MCF 10A (cell line): ENCODE measurements at regions of chr11 and their contacts with region 1.

Region 1: GRCh38 chr11:108647701-108648527 is 17.0 kb upstream of the DDX10 start:
- DNase-seq: peak; percentile 82
- H3K4me3 Mint-ChIP-seq: peak overlapping the region; percentile 36
- H3K27ac Mint-ChIP-seq: peak overlapping the region; percentile 90
- H3K4me1 Mint-ChIP-seq: peaks cover 15% of the 10 kb centered on the region
- H3K27me3 Mint-ChIP-seq: no peaks in the 10 kb centered on the region
- CTCF ChIP-seq: peak; percentile 80

Region 2: GRCh38 chr11:108121274-108122155 is 526.4 kb before region 1 on chr11 and contains the start of gene ACAT1:
- CTCF ChIA-PET with region 1: interaction called, 8 read pairs
- POLR2A ChIA-PET with region 1: interaction called, 4 read pairs
- intact Hi-C with region 1: loop called (anchors 2 kb)
- DNase-seq: peak; percentile 95
- H3K4me3 Mint-ChIP-seq: peak within 1 kb of the TSS; percentile 83
- H3K27ac Mint-ChIP-seq: peak within 1 kb of the TSS; percentile 91
- H3K4me1 Mint-ChIP-seq: peaks cover 38% of the 10 kb centered on the region
- H3K27me3 Mint-ChIP-seq: no peaks in the 10 kb centered on the region
- CTCF ChIP-seq: peak; percentile 7
- total RNA-seq, gene ACAT1: 75.5 and 86.8 TPM in 2 replicates

Region 3: DNA sequence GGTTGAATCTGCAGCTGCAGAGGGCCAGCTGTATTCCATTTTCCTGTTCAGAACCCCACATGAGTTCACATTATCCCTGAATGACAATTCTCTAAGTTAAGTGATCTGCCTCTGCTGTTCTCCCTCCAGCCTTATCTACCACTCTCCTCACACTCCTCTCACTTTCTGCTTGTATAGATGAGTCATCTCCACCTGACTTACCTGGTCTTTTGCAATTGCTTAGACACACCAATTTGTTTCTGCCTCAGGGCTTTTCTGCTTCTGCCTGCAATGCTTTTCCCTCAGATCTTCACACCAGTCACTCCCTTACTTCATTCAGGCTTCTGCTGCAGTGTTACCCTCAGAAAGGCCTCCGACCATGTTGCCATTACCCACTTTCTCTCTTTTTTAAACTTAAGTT is 306.9 kb before region 1 on chr11:
- CTCF ChIA-PET with region 1: interaction called, 4 read pairs
- POLR2A ChIA-PET with region 1: interaction called, 6 read pairs
- intact Hi-C with region 1: loop called (anchors 5 kb)
- DNase-seq: peak; percentile 92
- H3K4me3 Mint-ChIP-seq: no peak overlapping the region
- H3K27ac Mint-ChIP-seq: peak overlapping the region; percentile 4
- H3K4me1 Mint-ChIP-seq: peaks cover 20% of the 10 kb centered on the region
- H3K27me3 Mint-ChIP-seq: no peaks in the 10 kb centered on the region
- CTCF ChIP-seq: no peak

Region 4: DNA sequence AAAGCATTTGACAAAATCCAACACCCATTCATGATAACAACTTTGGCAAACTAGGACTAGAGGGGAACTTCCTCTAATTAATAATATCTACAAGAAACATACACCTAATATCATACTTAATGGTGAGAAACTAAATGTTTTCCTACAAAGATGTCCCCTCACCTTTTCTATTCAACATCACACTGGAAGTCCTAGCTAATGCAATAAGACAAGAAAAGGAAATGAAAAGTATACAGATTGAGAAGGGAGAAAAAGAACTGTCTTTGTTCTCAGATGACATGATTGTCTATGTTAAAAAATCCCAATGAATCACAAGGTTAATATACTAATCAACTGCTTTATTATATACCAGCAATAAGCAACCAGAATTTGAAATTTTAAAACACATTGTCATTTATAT is 233.0 kb before region 1 on chr11:
- CTCF ChIA-PET with region 1: interaction called, 4 read pairs
- POLR2A ChIA-PET with region 1: interaction called, 3 read pairs
- intact Hi-C with region 1: loop called (anchors 1 kb)
- DNase-seq: no peak
- H3K4me3 Mint-ChIP-seq: no peak overlapping the region
- H3K27ac Mint-ChIP-seq: no peak overlapping the region
- H3K4me1 Mint-ChIP-seq: no peaks in the 10 kb centered on the region
- H3K27me3 Mint-ChIP-seq: no peaks in the 10 kb centered on the region
- CTCF ChIP-seq: no peak

Region 5: GRCh38 chr11:108467091-108467823 is 180.7 kb before region 1 on chr11 and contains the start of gene C11orf65:
- CTCF ChIA-PET with region 1: interaction called, 4 read pairs
- POLR2A ChIA-PET with region 1: interaction called, 5 read pairs
- intact Hi-C with region 1: loop called (anchors 5 kb)
- DNase-seq: peak; percentile 98
- H3K4me3 Mint-ChIP-seq: peak within 1 kb of the TSS; percentile 93
- H3K27ac Mint-ChIP-seq: peak within 1 kb of the TSS; percentile 100
- H3K4me1 Mint-ChIP-seq: peaks cover 11% of the 10 kb centered on the region
- H3K27me3 Mint-ChIP-seq: no peaks in the 10 kb centered on the region
- CTCF ChIP-seq: no peak
- total RNA-seq, gene C11orf65: 1.4 and 1.5 TPM in 2 replicates

Region 6: DNA sequence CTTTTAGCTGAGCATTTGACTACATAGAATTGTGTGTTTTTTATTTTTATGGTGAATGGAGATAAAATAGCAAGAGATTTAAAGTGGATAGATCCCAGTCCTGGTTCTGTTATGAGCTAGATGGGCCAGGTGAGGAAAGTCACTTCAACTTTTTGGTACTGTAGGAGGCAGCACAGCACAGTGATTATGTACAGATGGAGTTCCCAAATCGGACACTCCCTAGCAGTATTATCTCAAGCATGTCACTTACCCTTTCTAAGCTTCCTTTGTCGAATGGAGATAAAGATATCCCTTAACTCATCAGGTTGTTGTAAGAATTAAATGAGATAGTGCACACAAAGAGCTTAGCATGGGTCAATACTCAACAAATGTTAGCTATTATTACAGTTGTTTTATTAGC is 59.6 kb before region 1 on chr11:
- CTCF ChIA-PET with region 1: interaction called, 6 read pairs
- POLR2A ChIA-PET with region 1: interaction called, 12 read pairs
- intact Hi-C with region 1: loop called (anchors 1 kb)
- DNase-seq: no peak
- H3K4me3 Mint-ChIP-seq: no peak overlapping the region
- H3K27ac Mint-ChIP-seq: no peak overlapping the region
- H3K4me1 Mint-ChIP-seq: peaks cover 15% of the 10 kb centered on the region
- H3K27me3 Mint-ChIP-seq: no peaks in the 10 kb centered on the region
- CTCF ChIP-seq: no peak

Region 7: DNA sequence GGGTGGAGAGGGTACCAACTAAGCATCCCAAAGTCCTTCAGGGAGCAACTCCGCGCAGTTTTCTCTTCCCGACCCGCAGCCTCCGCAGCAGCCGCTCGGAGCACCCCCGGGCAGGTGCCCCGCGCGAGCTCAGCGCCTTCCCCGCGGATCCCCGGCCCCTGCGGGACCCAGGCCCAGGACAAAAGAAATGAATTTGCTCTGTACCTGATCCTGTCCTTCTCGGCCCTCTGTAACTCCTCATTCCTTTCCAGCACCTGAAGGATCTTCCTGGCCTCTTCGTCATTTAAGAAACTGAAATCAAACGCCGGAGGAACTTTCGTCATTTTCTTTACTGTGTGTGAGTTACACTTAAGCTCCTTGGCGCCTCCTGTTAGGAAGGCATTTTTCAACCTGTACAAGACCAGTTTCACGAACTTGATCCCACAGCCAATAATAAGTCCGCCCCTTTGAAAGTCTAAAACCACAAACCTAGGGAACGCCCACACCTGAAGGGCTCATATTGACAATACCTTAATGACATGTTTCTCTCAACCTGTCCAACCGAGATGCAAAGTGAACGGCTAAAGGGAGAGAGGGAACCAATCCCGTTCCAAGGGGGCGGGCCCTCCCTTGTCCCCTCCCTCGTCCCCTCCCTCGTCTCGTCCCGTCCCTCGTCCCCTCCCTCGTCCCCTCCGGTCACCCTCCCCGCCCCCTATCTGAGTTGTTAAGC is 54.5 kb before region 1 on chr11 and contains the start of gene EXPH5:
- CTCF ChIA-PET with region 1: interaction called, 6 read pairs
- POLR2A ChIA-PET with region 1: interaction called, 12 read pairs
- intact Hi-C with region 1: loop called (anchors 1 kb)
- DNase-seq: peak; percentile 98
- H3K4me3 Mint-ChIP-seq: peak within 1 kb of the TSS; percentile 99
- H3K27ac Mint-ChIP-seq: peak within 1 kb of the TSS; percentile 98
- H3K4me1 Mint-ChIP-seq: peaks cover 20% of the 10 kb centered on the region
- H3K27me3 Mint-ChIP-seq: no peaks in the 10 kb centered on the region
- CTCF ChIP-seq: no peak
- total RNA-seq, gene EXPH5: 9.2 and 17.9 TPM in 2 replicates

Region 8: GRCh38 chr11:108895579-108896480 is 247.9 kb after region 1 on chr11:
- CTCF ChIA-PET with region 1: no interaction called
- POLR2A ChIA-PET with region 1: no interaction called
- intact Hi-C with region 1: no loop called
- DNase-seq: peak; percentile 65
- H3K4me3 Mint-ChIP-seq: peak overlapping the region; percentile 66
- H3K27ac Mint-ChIP-seq: peak overlapping the region; percentile 84
- H3K4me1 Mint-ChIP-seq: peaks cover 15% of the 10 kb centered on the region
- H3K27me3 Mint-ChIP-seq: no peaks in the 10 kb centered on the region
- CTCF ChIP-seq: no peak